CD4-positive, alpha-beta memory T cell (primary cell): ENCODE measurements at regions of chr10 and their contacts with region 1.

Region 1: GRCh38 chr10:72319416-72320254 is 35.1 kb downstream of the DNAJB12 start:
- DNase-seq: peak; percentile 87 to 91 (median 89)
- H3K4me3 ChIP-seq: peak overlapping the region; percentile 46 to 55
- H3K4me3 Mint-ChIP-seq: peak overlapping the region; percentile 79 to 89 (median 84)
- H3K27ac ChIP-seq: peak overlapping the region; percentile 89
- H3K27ac Mint-ChIP-seq: peak overlapping the region; percentile 96 to 99 (median 99)
- H3K4me1 ChIP-seq: peaks cover 95% of the 10 kb centered on the region
- H3K4me1 Mint-ChIP-seq: peaks cover 53 to 92% (median 74%) of the 10 kb centered on the region in 4 donors
- H3K27me3 ChIP-seq: no peaks in the 10 kb centered on the region
- H3K27me3 Mint-ChIP-seq: no peaks in the 10 kb centered on the region

Region 2: GRCh38 chr10:72285972-72286521 is 33.6 kb before region 1 on chr10:
- CTCF ChIA-PET with region 1: interaction called, 4 read pairs
- POLR2A ChIA-PET with region 1: interaction called, 368 read pairs
- intact Hi-C with region 1: no loop called
- DNase-seq: no peak
- H3K4me3 ChIP-seq: no peak overlapping the region
- H3K4me3 Mint-ChIP-seq: peak overlapping the region in 3 of 8 donors; percentile 2 to 73 (median 11)
- H3K27ac ChIP-seq: no peak overlapping the region
- H3K27ac Mint-ChIP-seq: peak overlapping the region; percentile 19 to 92 (median 87)
- H3K4me1 ChIP-seq: peaks cover 31% of the 10 kb centered on the region
- H3K4me1 Mint-ChIP-seq: peaks cover 26 to 46% (median 37%) of the 10 kb centered on the region in 4 donors
- H3K27me3 ChIP-seq: no peaks in the 10 kb centered on the region
- H3K27me3 Mint-ChIP-seq: no peaks in the 10 kb centered on the region